ENCODE measurements at regions of chr12 and their contacts with region 1.

Region 1: GRCh38 chr12:56258057-56258819 is at the start of gene ANKRD52:
- DNase-seq: peak; percentile 82 to 85
- ATAC-seq: peak; percentile 71 to 84 (median 79)
- H3K4me3 ChIP-seq: peak within 1 kb of the TSS; percentile 97
- H3K27ac ChIP-seq: peak within 1 kb of the TSS; percentile 89
- H3K4me1 ChIP-seq: peaks cover 42% of the 10 kb centered on the region
- H3K27me3 ChIP-seq: no peaks in the 10 kb centered on the region
- CTCF ChIP-seq: peak; percentile 83
- total RNA-seq, gene ANKRD52: 14.2 to 37.5 (median 21.5) TPM

Region 2: DNA sequence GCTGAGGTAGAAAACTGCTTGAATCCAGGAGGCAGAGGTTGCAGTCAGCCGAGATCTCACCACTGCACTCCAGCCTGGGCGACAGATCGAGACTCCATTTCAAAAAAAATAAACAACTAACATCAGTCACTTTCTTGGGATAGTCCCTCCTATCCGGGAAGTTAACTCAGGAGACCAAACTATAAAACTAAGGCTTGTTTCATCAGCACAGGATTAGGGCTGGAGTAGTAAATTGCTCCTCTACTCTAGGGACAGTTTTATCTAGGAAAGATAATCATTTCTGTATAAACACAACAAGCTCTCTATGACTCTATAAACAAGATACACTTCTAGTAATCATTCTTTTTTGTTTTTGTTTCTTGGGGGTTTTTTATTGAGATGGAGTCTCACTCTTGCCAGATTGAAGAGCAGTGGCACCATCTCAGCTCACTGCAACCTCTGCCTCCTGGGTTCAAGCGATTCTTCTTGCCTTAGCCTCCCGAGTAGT is 204.8 kb before region 1 on chr12:
- intact Hi-C with region 1: no loop called
- DNase-seq: no peak
- ATAC-seq: no peak
- H3K4me3 ChIP-seq: no peak overlapping the region
- H3K27ac ChIP-seq: no peak overlapping the region
- H3K4me1 ChIP-seq: no peaks in the 10 kb centered on the region
- H3K27me3 ChIP-seq: no peaks in the 10 kb centered on the region
- CTCF ChIP-seq: no peak

Region 3: GRCh38 chr12:56224102-56224701 is 34.0 kb before region 1 on chr12 and contains the start of gene NABP2:
- intact Hi-C with region 1: loop called (anchors 2 to 5 kb)
- DNase-seq: peak; percentile 99
- ATAC-seq: peak; percentile 86 to 90 (median 89)
- H3K4me3 ChIP-seq: peak within 1 kb of the TSS; percentile 75
- H3K27ac ChIP-seq: peak within 1 kb of the TSS; percentile 96
- H3K4me1 ChIP-seq: peaks cover 34% of the 10 kb centered on the region
- H3K27me3 ChIP-seq: no peaks in the 10 kb centered on the region
- CTCF ChIP-seq: peak; percentile 84
- total RNA-seq, gene NABP2: 27.2 to 32.1 (median 29.8) TPM

Measured in psoas muscle (tissue), 8 donors.